ENCODE measurements at regions of chr1 and their contacts with region 1.

Region 1: GRCh38 chr1:88204612-88205167 is 479.4 kb upstream of the PKN2 start:
- DNase-seq: no peak
- H3K4me3 ChIP-seq: no peak overlapping the region
- H3K27ac ChIP-seq: no peak overlapping the region
- H3K4me1 ChIP-seq: no peaks in the 10 kb centered on the region
- H3K27me3 ChIP-seq: no peaks in the 10 kb centered on the region
- CTCF ChIP-seq: no peak
- POLR2A ChIP-seq: no peak

Region 2: GRCh38 chr1:87706203-87706602 is 498.5 kb before region 1 on chr1:
- intact Hi-C with region 1: loop called (anchors 5 kb)
- DNase-seq: no peak
- H3K4me3 ChIP-seq: no peak overlapping the region
- H3K27ac ChIP-seq: no peak overlapping the region
- H3K4me1 ChIP-seq: no peaks in the 10 kb centered on the region
- H3K27me3 ChIP-seq: no peaks in the 10 kb centered on the region
- CTCF ChIP-seq: no peak
- POLR2A ChIP-seq: no peak

Region 3: DNA sequence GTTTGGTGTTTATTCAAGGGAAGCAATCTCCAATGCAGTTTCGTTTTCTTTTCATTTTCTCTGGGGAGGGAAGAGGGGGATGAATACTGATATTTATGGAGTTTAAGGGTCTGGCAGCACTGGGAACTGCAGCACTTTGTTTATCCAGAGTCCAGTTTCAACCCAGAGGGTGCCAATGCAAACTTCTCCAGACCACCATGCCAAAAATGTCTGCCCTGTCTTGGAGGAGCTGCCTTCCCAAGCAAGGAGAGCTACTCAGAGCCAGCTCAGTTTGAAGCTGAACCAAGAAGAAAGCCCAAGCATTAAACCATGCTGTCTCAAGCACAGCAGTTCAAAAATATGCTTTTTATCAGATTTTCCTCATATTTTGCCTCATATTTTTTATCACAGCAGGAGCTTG is 286.3 kb before region 1 on chr1:
- intact Hi-C with region 1: no loop called
- DNase-seq: no peak
- H3K4me3 ChIP-seq: no peak overlapping the region
- H3K27ac ChIP-seq: no peak overlapping the region
- H3K4me1 ChIP-seq: no peaks in the 10 kb centered on the region
- H3K27me3 ChIP-seq: no peaks in the 10 kb centered on the region
- CTCF ChIP-seq: no peak
- POLR2A ChIP-seq: no peak

Measured in breast epithelium (tissue), 4 donors.